Activated B cell treated with CpG ODN at 0.5 μM for 24 hours (primary cell): ENCODE measurements at regions of chr5 and their contacts with region 1.

Region 1: GRCh38 chr5:142699184-142699720 is 13.4 kb upstream of the FGF1 start:
- DNase-seq: peak; percentile 33
- ATAC-seq: peak; percentile 73
- H3K4me3 Mint-ChIP-seq: no peak overlapping the region
- H3K27ac Mint-ChIP-seq: no peak overlapping the region
- H3K4me1 Mint-ChIP-seq: no peaks in the 10 kb centered on the region
- H3K27me3 Mint-ChIP-seq: peaks cover 17% of the 10 kb centered on the region
- CTCF ChIP-seq: peak; percentile 25

Region 2: DNA sequence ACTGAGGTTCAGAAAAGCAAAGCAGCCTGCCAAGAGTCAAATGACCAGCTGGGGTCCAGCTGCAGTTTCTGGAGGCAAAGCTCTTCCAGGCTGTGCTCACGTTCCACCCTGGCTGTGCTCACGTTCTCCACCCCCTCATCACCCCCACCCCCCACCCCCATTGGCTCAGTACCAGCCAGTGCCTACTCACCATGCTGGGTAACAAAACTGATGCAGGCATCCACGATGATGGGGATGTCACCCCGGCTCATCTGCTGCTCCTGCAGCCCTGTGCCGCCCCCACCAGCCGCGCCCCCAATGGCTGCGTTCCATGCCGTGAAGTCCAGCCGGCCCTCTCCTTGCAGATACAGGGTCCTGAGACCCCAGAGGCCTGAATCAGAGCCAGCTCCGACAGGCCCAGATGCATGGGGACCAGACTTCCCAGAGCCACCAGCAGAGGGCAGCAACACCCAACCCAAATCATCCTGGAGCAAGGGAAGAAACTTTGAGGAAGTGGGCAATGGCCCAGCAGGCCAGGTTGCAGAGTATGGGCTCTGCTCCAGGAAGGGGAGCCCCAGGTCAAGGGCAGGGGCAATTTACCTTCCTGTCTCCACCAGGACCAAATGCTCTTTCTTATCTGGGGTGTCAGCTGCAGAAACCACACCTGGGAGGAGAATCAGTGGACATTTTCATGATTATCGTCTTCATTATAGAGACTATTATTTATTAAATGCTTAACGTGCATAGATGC is 1034.4 kb before region 1 on chr5:
- CTCF ChIA-PET with region 1: no interaction called
- POLR2A ChIA-PET with region 1: no interaction called
- intact Hi-C with region 1: loop called (anchors 1 kb)
- DNase-seq: peak; percentile 75
- ATAC-seq: peak; percentile 96
- H3K4me3 Mint-ChIP-seq: no peak overlapping the region
- H3K27ac Mint-ChIP-seq: no peak overlapping the region
- H3K4me1 Mint-ChIP-seq: peaks cover 4% of the 10 kb centered on the region
- H3K27me3 Mint-ChIP-seq: peaks cover 4% of the 10 kb centered on the region
- CTCF ChIP-seq: peak; percentile 93

Region 3: DNA sequence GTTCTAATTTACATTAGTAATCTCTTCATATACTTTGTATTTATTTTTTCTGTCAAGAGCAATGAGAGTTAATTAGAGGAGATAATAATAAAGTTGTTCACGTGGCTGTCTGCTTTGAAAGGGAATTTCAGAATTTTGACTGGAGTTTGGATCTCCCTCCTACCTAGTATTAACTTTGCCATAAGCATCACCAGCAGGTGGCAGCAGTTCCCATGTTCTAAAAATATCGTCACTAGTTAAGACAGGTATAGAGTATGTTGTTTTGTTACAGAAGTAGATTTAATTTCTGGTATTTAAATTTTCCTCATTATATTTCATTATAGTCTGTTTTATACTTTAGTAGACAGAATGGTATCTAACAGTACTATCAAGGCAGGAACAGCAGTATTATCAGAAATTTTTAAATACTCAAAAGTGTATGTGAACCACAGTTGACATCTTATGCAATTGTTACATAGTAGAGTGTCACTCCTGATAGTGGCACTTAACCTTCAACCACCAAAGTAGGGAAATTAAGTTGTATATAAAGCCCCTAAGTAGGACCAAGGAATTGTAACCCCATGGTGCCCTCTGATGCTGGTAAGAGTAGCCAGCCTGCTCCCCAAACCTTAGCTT is 706.8 kb before region 1 on chr5:
- CTCF ChIA-PET with region 1: no interaction called
- POLR2A ChIA-PET with region 1: no interaction called
- intact Hi-C with region 1: loop called (anchors 1 kb)
- DNase-seq: no peak
- ATAC-seq: peak; percentile 50
- H3K4me3 Mint-ChIP-seq: no peak overlapping the region
- H3K27ac Mint-ChIP-seq: no peak overlapping the region
- H3K4me1 Mint-ChIP-seq: no peaks in the 10 kb centered on the region
- H3K27me3 Mint-ChIP-seq: no peaks in the 10 kb centered on the region
- CTCF ChIP-seq: peak; percentile 57

Region 4: DNA sequence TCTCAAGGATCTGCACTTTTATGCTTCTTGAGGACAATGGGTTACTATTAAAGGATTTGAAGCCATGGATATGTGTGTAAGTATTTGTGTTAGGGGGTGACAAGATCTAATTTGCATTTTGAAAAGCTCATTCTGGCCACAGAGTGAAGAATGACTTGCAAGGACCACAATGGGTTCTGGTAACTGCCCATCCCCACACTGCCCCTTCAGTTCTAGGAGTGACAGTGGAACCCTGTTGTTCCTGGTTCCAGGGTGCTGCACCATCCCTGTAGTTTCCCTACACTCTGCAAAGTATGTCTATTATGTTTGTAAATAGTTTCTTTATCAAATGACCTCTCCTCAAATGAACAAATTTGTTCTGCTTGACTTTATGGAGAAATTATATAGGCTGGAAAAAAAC is 364.7 kb before region 1 on chr5:
- CTCF ChIA-PET with region 1: no interaction called
- POLR2A ChIA-PET with region 1: no interaction called
- intact Hi-C with region 1: no loop called
- DNase-seq: no peak
- ATAC-seq: no peak
- H3K4me3 Mint-ChIP-seq: no peak overlapping the region
- H3K27ac Mint-ChIP-seq: no peak overlapping the region
- H3K4me1 Mint-ChIP-seq: no peaks in the 10 kb centered on the region
- H3K27me3 Mint-ChIP-seq: peaks cover 11% of the 10 kb centered on the region
- CTCF ChIP-seq: no peak

Region 5: DNA sequence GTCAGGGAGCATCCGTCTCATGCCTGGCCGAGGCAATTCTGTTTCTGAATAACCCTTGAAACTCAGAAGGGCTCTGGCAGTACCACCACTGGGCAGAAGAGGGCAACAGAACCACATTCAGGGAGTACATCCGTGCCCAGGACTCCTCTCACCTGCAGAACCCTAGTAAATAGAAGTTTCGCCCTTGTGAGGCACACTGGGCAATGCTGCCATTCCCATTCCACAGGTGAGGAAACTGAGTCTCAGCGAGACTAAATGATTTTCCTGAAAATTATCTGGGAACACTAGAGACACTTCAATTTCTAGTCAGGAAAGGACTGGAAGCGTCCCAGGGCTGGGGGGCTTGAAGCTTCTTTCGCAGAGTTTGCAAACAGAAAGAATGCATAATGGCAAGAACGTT is 88.1 kb before region 1 on chr5:
- CTCF ChIA-PET with region 1: no interaction called
- POLR2A ChIA-PET with region 1: no interaction called
- intact Hi-C with region 1: loop called (anchors 2 kb)
- DNase-seq: peak; percentile 29
- ATAC-seq: peak; percentile 77
- H3K4me3 Mint-ChIP-seq: no peak overlapping the region
- H3K27ac Mint-ChIP-seq: no peak overlapping the region
- H3K4me1 Mint-ChIP-seq: peaks cover 2% of the 10 kb centered on the region
- H3K27me3 Mint-ChIP-seq: peaks cover 19% of the 10 kb centered on the region
- CTCF ChIP-seq: no peak

Region 6: GRCh38 chr5:142655339-142656267 is 43.6 kb before region 1 on chr5:
- CTCF ChIA-PET with region 1: interaction called, 8 read pairs
- POLR2A ChIA-PET with region 1: no interaction called
- intact Hi-C with region 1: loop called (anchors 1 kb)
- DNase-seq: peak; percentile 48
- ATAC-seq: peak; percentile 56
- H3K4me3 Mint-ChIP-seq: no peak overlapping the region
- H3K27ac Mint-ChIP-seq: no peak overlapping the region
- H3K4me1 Mint-ChIP-seq: no peaks in the 10 kb centered on the region
- H3K27me3 Mint-ChIP-seq: peaks cover 21% of the 10 kb centered on the region
- CTCF ChIP-seq: peak; percentile 72

Region 7: GRCh38 chr5:142946547-142947426 is 247.5 kb after region 1 on chr5:
- CTCF ChIA-PET with region 1: no interaction called
- POLR2A ChIA-PET with region 1: no interaction called
- intact Hi-C with region 1: no loop called
- DNase-seq: no peak
- ATAC-seq: no peak
- H3K4me3 Mint-ChIP-seq: no peak overlapping the region
- H3K27ac Mint-ChIP-seq: no peak overlapping the region
- H3K4me1 Mint-ChIP-seq: peaks cover 11% of the 10 kb centered on the region
- H3K27me3 Mint-ChIP-seq: no peaks in the 10 kb centered on the region
- CTCF ChIP-seq: no peak